IMR-90 (cell line): ENCODE measurements at regions of chr17 and their contacts with region 1.

Region 1: DNA sequence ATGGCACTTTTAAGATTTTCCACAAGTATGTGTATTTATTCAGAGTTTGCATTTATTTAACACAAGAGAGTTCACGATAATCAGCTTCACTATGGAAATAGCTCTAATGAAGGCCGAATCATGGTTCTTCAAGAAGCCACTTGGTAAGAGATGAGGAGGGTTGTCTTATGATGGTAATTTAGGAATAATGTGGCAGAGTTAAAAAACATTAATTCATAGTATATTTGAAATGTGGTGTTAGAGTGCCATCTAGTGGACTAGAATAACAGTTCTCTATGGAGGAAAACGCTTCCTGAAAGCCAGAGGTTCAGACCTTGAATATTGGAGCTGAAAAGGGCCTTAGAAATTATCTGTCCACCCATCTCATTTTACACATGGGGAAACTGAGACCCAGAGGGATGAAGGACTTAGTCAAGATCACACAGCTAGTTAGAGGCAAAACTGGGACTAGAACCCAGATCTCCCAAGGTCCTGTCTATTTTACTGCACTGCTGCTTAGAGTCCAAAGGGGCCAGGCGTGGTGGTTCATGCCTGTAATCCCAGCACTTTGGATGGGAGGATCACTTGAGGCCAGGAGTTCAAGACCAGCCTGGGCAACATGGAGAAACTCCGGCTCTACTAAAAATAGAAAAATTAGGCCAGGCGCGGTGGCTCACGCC is 33.8 kb upstream of the KPNB1 start:
- DNase-seq: peak; percentile 62
- ATAC-seq: peak; percentile 58
- H3K4me3 ChIP-seq: no peak overlapping the region
- H3K27ac ChIP-seq: no peak overlapping the region; the same call in 1 of the 2 replicates
- H3K4me1 ChIP-seq: peaks cover 11% of the 10 kb centered on the region
- H3K27me3 ChIP-seq: no peaks in the 10 kb centered on the region
- CTCF ChIP-seq: peak; percentile 71
- POLR2A ChIP-seq: no peak
- RAD21 ChIP-seq: peak; percentile 61

Region 2: DNA sequence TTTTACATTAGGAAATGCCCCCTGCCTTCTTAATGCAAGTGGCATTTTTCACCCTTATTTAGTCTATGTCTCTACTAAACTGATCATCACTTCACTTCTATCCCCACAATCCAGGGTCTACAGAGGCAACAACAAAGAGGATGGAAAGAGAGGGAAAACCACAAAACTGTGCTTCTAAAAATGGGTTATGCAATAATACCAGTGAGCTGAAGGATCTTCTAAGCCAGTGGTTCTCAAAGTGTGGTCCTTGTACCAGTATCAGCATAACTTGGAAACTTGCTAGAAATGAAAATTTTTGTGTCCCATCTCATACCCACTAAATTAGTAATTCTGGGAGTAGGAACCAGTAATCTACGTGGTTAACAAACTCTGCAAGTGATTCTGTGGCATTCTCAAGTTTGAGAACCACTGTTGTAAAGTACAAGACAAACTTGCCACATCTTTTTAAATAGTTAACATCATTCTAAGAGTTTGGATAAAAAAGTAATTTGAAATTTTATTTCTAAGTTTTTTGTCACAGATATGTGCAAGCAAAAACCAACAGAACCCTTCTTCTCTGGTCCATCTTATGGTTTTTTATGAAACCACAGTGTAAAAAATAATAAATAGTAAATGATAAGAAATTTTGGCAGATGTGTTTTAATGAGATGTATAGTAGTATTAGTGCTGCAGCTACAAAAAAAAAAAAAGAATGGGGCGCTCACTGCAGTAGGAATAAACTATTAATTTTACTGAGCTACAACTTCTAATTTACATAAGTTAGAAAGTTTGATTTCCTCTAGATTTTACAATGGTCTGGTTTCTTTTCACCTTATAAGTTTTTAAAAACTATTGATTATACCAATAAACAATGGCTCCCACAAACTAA is 443.0 kb before region 1 on chr17:
- CTCF ChIA-PET with region 1: interaction called, 3 read pairs
- POLR2A ChIA-PET with region 1: no interaction called
- dilution Hi-C with region 1: no loop called
- in situ Hi-C with region 1: loop called (anchors 25 kb)
- intact Hi-C with region 1: loop called (anchors 10 kb)
- DNase-seq: no peak
- ATAC-seq: no peak
- H3K4me3 ChIP-seq: no peak overlapping the region
- H3K27ac ChIP-seq: no peak overlapping the region
- H3K4me1 ChIP-seq: peaks cover 2% of the 10 kb centered on the region; the same call in 1 of the 2 replicates
- H3K27me3 ChIP-seq: no peaks in the 10 kb centered on the region
- CTCF ChIP-seq: no peak
- POLR2A ChIP-seq: no peak
- RAD21 ChIP-seq: no peak

Region 3: DNA sequence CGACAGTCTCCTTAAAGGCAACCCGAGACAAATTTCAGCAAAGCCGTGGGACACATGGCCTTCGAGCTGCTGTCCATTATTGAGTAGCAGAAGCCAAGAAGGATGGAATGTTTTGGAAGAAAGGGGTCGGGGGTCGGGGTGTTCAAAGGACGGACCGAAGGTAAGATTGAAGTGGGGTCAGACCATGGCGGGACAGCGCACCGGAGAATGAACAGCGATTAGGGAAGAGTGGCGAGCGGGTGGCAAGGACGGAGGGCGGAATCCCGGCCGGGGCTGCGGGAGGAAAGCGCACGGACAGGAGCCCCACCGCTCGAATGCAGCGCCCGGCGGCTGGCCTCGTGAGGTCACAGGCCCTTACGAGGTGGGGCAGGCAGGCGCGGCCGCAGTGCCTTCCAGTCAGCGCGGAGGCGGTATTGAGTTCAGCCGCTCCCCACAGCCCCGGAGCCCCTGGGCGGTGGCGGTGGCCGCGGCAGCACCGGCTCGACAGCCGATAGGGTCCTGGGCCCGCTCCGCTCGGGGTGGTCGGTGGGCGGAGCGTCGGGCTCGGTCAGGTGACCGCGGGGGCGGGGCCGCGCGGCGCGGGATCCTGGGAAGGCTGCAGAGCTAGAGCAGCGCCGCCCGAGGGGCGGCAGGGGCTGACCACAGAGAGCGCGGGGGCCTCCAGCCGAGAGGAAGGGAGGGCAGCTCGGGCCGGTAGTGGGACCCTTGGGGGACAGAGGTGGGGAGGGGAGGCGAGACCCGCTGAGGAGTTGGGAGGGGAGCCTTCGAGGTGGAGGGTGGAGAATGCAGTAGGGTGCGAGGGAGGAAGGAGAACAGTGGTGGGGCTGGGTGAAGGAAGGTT is 292.3 kb before region 1 on chr17 and contains the start of gene EFCAB13:
- CTCF ChIA-PET with region 1: no interaction called
- POLR2A ChIA-PET with region 1: no interaction called
- dilution Hi-C with region 1: no loop called
- in situ Hi-C with region 1: no loop called
- intact Hi-C with region 1: loop called (anchors 2 kb)
- DNase-seq: peak; percentile 71
- ATAC-seq: peak; percentile 97
- H3K4me3 ChIP-seq: peak within 1 kb of the TSS; percentile 91
- H3K27ac ChIP-seq: peak within 1 kb of the TSS; percentile 88
- H3K4me1 ChIP-seq: no peaks in the 10 kb centered on the region
- H3K27me3 ChIP-seq: no peaks in the 10 kb centered on the region
- CTCF ChIP-seq: peak; percentile 9; the same call in 1 of the 2 replicates
- POLR2A ChIP-seq: peak; percentile 61
- RAD21 ChIP-seq: no peak
- total RNA-seq, gene EFCAB13: 1.1 and 1.4 TPM in 2 replicates

Region 4: DNA sequence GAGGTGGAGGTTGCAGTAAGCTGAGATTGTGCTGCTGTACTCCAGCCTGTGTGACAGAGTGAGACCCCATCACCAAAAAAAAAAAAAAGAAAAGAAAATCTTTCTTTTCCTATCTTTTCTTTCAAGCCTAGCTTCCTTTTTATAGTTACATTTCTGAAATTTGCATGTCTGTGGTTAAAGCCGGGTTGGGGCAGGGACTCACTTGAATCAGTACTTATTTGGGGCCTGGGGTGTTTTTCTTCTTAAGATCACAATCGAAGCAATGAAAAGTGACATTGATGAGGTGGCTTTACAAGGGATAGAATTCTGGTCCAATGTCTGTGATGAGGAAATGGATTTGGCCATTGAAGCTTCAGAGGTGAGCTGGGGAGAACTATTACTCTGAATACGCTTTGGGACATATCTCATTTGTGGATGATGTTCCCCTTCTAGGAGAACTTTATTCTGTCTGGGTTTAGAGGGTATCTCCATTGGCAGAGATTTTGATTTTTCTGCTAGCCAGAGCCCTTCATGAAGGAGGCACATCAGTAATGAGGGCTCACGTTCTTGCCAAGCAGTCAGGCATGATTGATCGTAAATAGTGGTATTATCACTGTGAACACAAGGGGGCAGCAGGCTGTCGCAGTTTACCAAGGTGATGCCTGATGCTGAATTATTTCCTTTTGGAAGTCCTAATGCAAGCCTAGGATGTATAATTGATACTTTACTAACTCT is 48.2 kb after region 1 on chr17:
- CTCF ChIA-PET with region 1: no interaction called
- POLR2A ChIA-PET with region 1: no interaction called
- dilution Hi-C with region 1: no loop called
- in situ Hi-C with region 1: no loop called
- intact Hi-C with region 1: no loop called
- DNase-seq: peak; percentile 54
- ATAC-seq: peak; percentile 78
- H3K4me3 ChIP-seq: no peak overlapping the region
- H3K27ac ChIP-seq: no peak overlapping the region
- H3K4me1 ChIP-seq: no peaks in the 10 kb centered on the region; the same call in 1 of the 2 replicates
- H3K27me3 ChIP-seq: no peaks in the 10 kb centered on the region
- CTCF ChIP-seq: peak; percentile 68
- POLR2A ChIP-seq: no peak
- RAD21 ChIP-seq: peak; percentile 58